Cardiac septum (tissue), 1 donor: ENCODE measurements at regions of chr1 and their contacts with region 1.

Region 1: DNA sequence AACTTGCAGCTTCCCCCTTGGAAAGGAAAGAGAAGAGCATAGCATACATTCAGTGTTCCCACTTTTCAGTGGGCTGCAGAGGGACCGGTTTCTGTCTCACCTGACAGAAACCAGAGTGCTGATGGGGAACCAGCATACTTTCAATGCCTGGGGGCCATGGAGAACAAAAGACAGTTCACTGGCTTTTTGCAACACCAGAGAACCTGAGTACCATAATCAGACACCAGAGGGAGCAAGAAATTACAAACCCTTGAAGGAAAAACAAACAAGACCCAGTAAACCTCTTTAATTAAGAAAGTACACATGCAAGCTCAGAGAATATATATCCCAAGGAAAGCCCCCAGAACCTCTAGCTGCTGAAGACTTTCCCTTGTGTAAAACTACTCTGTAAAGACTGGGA is 51.1 kb downstream of the CSMD2 start:
- DNase-seq: no peak

Region 2: DNA sequence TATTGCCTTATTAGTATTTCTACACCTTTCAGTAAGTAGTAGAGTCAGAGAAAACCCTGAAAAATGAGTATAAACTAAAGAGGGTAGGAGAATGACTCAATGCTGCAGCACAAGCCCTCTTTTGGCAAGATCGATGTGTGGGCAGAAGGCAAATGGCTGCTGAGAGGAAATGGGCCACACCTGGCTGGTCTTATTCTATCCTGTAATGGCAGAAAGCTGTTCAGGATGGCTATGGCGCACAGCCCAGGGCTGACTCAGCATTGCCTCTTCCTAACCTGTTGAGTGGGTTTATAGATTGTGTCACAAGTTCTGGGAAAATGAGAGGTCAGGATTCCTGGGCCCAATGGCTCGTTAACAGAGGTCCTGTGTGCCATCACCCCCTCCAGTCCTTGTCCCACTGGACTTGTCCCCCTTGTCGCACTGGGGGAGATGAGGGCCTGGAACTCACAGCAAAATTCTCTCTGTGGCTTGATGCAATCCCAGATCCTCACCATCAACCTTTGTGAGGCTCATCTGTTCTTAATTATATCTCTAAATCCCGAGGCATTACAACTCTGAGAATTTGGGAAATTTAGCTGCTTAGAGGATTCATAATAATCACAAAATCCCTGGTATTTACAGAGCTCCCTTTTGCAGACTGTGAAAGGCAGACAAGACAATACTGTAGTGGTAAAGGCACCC is 236.8 kb before region 1 on chr1:
- intact Hi-C with region 1: loop called (anchors 5 kb)
- DNase-seq: peak; percentile 78

Region 3: GRCh38 chr1:33966346-33967141 is 147.3 kb before region 1 on chr1:
- intact Hi-C with region 1: no loop called
- DNase-seq: peak; percentile 2

Region 4: GRCh38 chr1:34597877-34598514 is 484.1 kb after region 1 on chr1:
- intact Hi-C with region 1: loop called (anchors 5 kb)
- DNase-seq: no peak

Region 5: GRCh38 chr1:34742667-34743270 is 628.9 kb after region 1 on chr1:
- intact Hi-C with region 1: loop called (anchors 5 kb)
- DNase-seq: peak; percentile 80